Right ventricle myocardium inferior (tissue), 1 donor: ENCODE measurements at regions of chr20 and their contacts with region 1.

Region 1: GRCh38 chr20:37194621-37195417 is 15.5 kb upstream of the MROH8 start:
- DNase-seq: no peak
- ATAC-seq: no peak

Region 2: DNA sequence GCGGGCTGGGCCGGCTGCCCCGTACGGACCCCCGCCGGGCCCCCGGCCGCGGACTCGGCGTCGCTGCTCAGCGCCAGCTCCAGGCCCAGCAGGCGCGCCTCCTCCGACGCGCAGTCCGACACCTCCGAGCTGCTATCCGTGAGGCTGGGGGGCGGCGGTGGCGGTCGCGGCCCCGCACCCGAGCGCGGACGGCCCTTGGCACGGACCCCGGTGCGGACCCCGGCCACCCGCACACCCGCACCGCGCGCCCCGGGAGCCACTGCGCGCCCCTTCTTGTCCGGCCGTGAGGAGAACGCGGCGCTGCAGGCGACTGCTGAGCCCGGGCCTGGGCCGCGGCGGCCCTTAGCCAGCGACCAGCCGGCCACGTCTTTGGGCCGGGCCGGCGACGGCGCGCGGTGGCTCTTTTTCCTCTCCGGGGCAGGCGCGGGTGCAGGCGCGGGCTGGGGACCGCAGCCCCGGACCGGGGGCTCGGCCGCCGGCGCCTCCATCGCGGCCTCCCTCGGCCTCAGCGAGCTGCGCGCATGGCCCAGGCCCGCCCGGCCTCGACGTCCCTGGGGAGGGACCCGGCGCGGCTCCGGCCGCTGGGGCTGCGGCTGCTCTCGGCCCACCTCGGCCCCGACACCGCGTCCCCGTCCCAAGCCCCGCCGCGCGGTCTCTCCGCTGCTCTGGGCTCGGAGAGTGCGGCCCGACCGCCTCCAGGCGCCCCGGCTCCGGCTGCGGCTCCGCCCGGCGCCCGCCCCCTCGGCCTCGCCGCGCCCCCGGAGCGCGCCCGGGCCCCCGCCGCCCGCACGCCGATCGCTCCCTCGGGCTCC is 331.8 kb before region 1 on chr20:
- intact Hi-C with region 1: no loop called
- DNase-seq: peak; percentile 78
- ATAC-seq: no peak

Region 3: DNA sequence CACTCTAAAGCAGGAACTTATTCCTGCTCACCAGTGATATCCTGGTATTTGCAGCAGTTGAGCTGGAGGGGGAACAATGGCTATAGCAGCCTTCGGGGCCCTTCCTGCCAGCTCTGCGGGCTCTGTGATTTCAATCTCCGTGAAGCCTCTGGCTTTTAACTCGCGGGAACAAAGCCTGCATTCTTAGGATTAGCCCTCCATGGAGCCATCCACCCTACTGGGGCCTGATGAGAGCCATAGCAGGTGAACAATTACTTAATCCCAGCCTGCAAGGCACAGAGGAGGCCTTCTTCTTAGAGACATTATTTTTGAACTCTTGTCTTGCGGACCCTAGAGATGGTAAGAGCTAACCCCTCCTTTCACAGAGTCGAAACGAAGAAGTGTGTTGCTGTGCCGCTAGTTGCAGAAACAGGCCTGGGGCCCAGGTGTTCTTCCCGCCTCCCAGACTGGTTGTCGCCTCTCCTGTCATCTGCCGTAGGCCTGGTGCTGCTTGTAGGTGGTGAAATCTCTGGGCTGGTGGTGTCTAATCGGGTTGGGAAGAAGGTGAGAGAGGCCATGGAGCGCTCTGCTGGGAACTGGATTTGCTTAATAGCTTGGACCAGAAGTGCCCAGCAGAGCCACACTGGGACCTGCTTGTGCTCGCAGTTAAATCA is 57.1 kb after region 1 on chr20:
- intact Hi-C with region 1: no loop called
- DNase-seq: no peak
- ATAC-seq: no peak

Region 4: GRCh38 chr20:37534401-37535157 is 339.8 kb after region 1 on chr20:
- intact Hi-C with region 1: loop called (anchors 1 kb)
- DNase-seq: no peak
- ATAC-seq: peak; percentile 84